HCT116 (cell line): ENCODE measurements at regions of chr2 and their contacts with region 1.

Region 1: DNA sequence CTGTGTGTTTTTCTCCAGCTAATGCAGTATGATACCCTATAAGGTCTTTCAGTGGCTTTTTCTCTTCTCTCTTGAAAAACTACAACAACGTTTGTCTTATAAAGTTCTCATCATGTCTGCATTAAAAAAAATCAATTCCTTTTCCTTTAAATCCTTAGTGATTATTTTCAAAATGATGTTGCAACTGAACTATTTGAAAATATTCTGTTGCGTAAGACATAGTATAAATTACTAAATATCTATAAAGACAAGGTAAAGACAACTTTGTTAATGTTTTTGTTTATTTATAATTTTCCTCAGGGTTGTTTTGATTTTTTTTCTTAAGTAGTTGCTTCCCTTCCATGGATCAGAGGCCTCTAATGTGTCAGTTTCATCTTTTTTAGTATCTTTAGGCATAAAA is 21.2 kb downstream of the PARD3B start:
- DNase-seq: no peak
- ATAC-seq: no peak
- H3K4me3 ChIP-seq: no peak overlapping the region
- H3K27ac ChIP-seq: no peak overlapping the region
- H3K4me1 ChIP-seq: no peaks in the 10 kb centered on the region
- H3K27me3 ChIP-seq: no peaks in the 10 kb centered on the region
- CTCF ChIP-seq: no peak
- POLR2A ChIP-seq: no peak
- RAD21 ChIP-seq: no peak

Region 2: GRCh38 chr2:204591225-204591624 is 24.8 kb after region 1 on chr2:
- CTCF ChIA-PET with region 1: no interaction called
- POLR2A ChIA-PET with region 1: no interaction called
- RAD21 ChIA-PET with region 1: no interaction called
- intact Hi-C with region 1: loop called (anchors 1 kb)
- DNase-seq: no peak
- ATAC-seq: no peak
- H3K4me3 ChIP-seq: no peak overlapping the region
- H3K27ac ChIP-seq: no peak overlapping the region
- H3K4me1 ChIP-seq: no peaks in the 10 kb centered on the region
- H3K27me3 ChIP-seq: no peaks in the 10 kb centered on the region
- CTCF ChIP-seq: no peak
- POLR2A ChIP-seq: no peak
- RAD21 ChIP-seq: no peak